ENCODE measurements at regions of chr17 and their contacts with region 1.

Region 1: DNA sequence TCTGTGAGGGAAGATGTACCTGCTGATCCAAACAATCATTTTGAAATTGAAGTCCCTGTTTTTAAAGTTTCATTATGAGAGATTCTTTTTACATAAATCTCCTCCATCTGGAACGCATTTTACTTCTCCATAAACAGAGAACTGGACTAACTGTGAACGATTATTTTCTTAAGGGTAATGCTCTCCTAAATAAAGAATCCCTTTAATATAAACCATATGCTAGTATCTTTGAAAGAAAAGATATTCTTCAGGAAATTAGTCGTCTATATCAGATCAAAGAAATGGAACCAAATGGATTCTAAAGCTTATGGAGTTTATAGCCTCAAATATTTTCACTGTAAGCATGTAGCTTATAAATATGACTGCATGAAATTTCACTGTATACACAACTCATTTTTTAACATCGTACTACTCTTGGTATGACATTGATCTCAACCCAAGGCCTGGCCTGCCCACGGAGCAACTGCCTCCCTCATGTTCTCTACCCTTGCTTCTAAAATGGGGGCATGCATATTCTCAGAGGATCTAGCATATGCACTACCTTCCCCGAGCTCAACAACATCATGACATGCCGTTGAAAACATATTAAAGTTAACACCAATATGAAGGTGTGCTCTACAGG is 66.4 kb downstream of the MYH10 start:
- DNase-seq: no peak
- ATAC-seq: no peak
- H3K4me3 ChIP-seq: no peak overlapping the region
- H3K4me3 Mint-ChIP-seq: no peak overlapping the region
- H3K27ac ChIP-seq: no peak overlapping the region
- H3K27ac Mint-ChIP-seq: no peak overlapping the region
- H3K4me1 ChIP-seq: no peaks in the 10 kb centered on the region
- H3K4me1 Mint-ChIP-seq: no peaks in the 10 kb centered on the region
- H3K27me3 ChIP-seq: no peaks in the 10 kb centered on the region
- H3K27me3 Mint-ChIP-seq: peaks cover 8 to 24% of the 10 kb centered on the region in 2 donors
- CTCF ChIP-seq: no peak

Region 2: DNA sequence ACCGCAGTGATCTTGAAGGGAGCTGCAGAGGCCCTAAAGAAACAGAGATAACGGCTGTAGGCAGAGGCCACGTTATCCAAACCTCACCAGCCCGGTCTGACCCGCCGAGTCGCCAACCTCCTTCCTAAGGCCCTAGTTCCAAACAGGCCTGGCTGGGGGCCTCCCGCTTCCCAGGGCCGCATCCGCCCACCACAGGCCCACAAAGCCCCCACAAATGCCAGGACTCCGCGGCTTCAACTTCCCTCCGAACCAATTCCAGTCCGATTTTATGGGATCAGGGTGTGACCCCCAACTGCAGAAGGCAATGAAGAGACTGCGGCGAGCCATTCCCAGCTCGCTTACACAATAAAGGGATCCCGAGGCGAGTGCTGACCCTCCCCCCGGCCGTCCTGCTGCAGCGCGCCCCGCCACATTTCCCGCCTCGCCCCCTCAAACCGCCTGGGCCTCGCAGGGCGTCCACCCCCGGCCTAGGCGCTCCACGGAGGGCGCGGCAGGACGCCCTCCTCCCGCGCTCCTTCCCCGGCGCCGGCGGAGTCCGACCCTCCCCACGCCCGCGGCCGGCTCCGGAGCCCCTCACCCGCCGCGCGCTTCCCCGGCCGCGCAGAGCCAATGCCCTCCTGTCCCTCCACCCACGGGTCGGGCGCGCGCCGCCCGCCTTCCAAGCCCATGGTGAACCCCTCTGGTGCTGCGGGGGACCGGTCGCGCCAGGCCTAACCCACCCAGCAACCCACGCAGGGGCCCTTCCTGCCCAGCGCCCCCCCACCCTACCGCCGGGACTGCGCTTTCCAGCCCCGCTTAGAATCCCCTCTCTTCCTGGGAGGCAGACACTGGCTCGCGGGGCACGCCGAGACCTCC is 65.5 kb after region 1 on chr17:
- intact Hi-C with region 1: loop called (anchors 10 kb)
- DNase-seq: peak in 1 of 2 donors; percentile 23
- ATAC-seq: no peak
- H3K4me3 ChIP-seq: peak overlapping the region; percentile 33
- H3K4me3 Mint-ChIP-seq: peak overlapping the region; percentile 91
- H3K27ac ChIP-seq: no peak overlapping the region
- H3K27ac Mint-ChIP-seq: no peak overlapping the region
- H3K4me1 ChIP-seq: peaks cover 20% of the 10 kb centered on the region
- H3K4me1 Mint-ChIP-seq: peaks cover 0 to 17% of the 10 kb centered on the region in 2 donors
- H3K27me3 ChIP-seq: peaks cover 36% of the 10 kb centered on the region
- H3K27me3 Mint-ChIP-seq: peaks cover 37 to 47% of the 10 kb centered on the region in 2 donors
- CTCF ChIP-seq: no peak

Measured in natural killer cell (primary cell).